ENCODE measurements at regions of chr12 and their contacts with region 1.

Region 1: GRCh38 chr12:1279050-1279449 is 288.0 kb downstream of the ERC1 start:
- DNase-seq: no peak

Region 2: DNA sequence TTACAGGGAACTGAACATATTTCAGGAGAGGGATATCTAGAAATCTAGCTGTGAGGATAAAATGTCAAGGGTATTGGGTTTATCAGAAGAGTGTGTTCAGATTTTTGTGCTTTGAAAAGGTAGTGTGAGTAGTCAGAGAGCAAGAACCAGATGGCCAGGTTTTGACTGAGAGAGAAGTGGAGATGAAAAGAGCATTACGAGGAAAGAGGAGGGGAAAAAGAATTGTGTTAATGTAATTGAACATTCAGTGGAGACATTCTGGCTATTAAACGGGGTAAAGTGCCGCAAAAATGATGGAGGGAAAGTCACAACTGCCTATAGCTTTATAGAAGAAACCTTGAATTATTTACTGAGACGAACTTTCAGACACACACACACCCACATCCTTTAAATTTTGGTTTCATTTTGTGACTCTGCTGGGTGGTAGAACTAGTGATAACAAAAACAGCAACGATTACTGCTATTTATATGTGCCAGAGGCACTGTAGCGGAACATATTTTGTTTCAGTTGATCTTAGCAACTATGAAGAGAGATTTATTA is 74.4 kb before region 1 on chr12:
- intact Hi-C with region 1: no loop called
- DNase-seq: no peak

Region 3: DNA sequence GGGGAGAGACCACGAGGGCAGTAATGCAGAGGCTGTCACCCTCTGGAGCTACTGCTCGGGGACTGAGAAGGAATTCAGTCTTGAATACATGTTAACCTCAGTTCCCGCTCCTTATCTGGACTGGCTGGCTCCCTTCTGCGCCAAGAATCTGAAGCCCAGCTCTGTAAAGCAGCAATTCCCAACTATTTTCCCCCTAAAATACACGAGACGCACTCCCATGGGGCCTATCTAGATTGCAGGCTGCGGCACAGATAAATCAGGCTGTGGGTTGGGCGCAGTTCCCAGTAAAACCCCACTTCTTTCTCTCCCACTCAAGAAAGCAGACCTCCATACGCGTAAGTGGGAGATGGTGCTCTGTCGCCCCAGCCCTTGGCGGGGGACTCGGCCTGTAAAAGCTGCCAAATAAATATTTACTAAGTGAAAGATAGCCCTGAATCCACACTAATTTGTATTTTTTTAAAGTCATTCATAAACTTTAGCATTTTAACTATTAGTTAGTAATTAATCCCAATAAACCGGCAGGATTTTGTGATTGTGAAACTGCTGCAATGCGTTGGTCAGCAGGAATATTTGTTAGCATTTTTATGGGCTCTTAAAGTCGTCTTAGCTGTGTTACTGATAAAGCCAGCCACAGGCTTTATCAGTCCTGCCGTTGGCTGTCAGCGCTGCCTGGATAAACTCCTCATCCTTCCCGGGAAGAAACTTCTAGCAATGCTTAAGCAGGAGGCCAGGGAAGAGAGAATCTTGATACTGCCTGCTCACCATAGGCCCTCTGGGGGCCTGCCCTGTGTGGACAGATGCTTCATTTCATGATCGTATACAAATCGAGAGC is 297.6 kb after region 1 on chr12:
- intact Hi-C with region 1: loop called (anchors 10 kb)
- DNase-seq: no peak

Measured in cardiac septum (tissue), 1 donor.